Psoas muscle (tissue), 8 donors: ENCODE measurements at regions of chr7 and their contacts with region 1.

Region 1: GRCh38 chr7:2477447-2478398 is 1.5 kb upstream of the GRIFIN start:
- DNase-seq: peak; percentile 69 to 73
- ATAC-seq: peak; percentile 69 to 77 (median 74)
- H3K4me3 ChIP-seq: no peak overlapping the region
- H3K27ac ChIP-seq: no peak overlapping the region
- H3K4me1 ChIP-seq: peaks cover 15% of the 10 kb centered on the region
- H3K27me3 ChIP-seq: peaks cover 0 to 58% (median 17%) of the 10 kb centered on the region in 3 donors
- CTCF ChIP-seq: peak; percentile 59

Region 2: DNA sequence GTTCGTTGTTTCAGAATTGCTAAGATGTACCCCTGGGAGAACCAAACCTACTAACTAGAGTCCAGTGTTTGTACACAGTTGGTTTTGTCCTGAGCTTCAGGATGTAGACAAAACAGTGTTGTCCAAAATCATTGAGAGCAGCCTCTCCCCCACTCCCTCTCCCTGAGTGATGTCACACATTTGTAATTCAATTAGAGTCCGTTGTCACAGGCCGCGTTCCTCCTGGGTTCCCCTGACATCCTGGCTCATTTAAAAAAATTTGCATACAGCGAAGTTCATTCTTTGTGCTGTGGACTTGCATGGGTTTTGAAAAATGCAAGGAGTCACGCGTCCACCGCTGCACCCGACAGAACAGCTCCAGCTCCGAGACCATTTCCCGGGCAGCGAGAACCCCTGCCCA is 11.8 kb before region 1 on chr7:
- intact Hi-C with region 1: no loop called
- DNase-seq: no peak
- ATAC-seq: no peak
- H3K4me3 ChIP-seq: no peak overlapping the region
- H3K27ac ChIP-seq: no peak overlapping the region
- H3K4me1 ChIP-seq: no peaks in the 10 kb centered on the region
- H3K27me3 ChIP-seq: peaks cover 0 to 25% (median 0%) of the 10 kb centered on the region in 3 donors
- CTCF ChIP-seq: no peak

Region 3: DNA sequence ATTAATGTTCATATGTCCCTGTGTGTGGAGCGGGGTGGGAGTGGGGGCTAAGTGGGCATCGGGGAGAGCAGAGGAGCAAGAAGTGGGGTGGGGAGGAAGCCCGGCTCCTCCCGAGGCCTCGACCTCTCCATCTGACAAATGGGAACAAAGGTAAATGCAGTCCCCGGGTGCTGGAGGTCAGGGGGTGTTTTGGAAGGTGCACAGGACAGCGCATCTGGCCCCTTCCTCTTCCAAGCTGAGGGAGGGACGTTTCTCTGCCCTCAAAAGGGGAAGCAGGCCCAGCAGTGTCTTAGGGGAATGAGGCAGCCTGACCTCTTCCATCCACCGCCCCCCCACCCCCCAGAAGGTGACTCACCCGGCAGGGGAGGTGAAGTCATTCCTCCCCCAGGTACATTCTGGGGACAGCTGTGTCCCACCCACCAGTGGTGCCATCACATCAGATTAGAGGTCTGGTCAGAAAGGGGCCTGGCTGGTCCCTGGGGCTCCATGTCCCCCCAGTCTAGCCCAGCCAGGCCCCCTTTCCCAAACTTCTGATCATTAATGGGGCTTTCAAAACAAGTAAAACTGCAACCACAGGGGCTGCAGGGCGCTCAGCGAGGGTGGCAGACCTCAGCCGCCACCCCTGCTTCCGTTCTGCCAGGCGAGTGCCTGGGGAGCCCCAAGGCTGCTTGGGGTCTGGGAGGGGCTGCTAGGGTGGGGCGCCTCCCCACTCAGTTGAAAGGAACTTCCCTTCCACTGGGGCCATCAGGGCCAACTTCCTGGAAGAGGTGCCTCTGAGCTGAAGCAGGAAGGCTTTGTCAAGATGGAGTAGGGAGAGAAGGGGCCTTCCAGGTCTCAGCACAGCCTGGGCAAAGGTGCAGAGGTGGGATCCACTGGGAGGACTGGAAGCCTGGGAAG is 52.6 kb after region 1 on chr7:
- intact Hi-C with region 1: no loop called
- DNase-seq: peak; percentile 46 to 62
- ATAC-seq: peak; percentile 16 to 52 (median 24)
- H3K4me3 ChIP-seq: no peak overlapping the region
- H3K27ac ChIP-seq: peak overlapping the region; percentile 23
- H3K4me1 ChIP-seq: peaks cover 3% of the 10 kb centered on the region
- H3K27me3 ChIP-seq: peaks cover 0 to 6% (median 6%) of the 10 kb centered on the region in 3 donors
- CTCF ChIP-seq: no peak

Region 4: GRCh38 chr7:2544541-2545188 is 66.9 kb after region 1 on chr7:
- intact Hi-C with region 1: loop called in 1 of 2 experiments (anchors 5 kb)
- DNase-seq: no peak
- ATAC-seq: no peak
- H3K4me3 ChIP-seq: no peak overlapping the region
- H3K27ac ChIP-seq: no peak overlapping the region
- H3K4me1 ChIP-seq: no peaks in the 10 kb centered on the region
- H3K27me3 ChIP-seq: no peaks in the 10 kb centered on the region
- CTCF ChIP-seq: no peak

Region 5: GRCh38 chr7:2597273-2597640 is 119.5 kb after region 1 on chr7:
- intact Hi-C with region 1: no loop called
- DNase-seq: no peak
- ATAC-seq: no peak
- H3K4me3 ChIP-seq: no peak overlapping the region
- H3K27ac ChIP-seq: no peak overlapping the region
- H3K4me1 ChIP-seq: no peaks in the 10 kb centered on the region
- H3K27me3 ChIP-seq: no peaks in the 10 kb centered on the region
- CTCF ChIP-seq: no peak